B cell (primary cell): ENCODE measurements at regions of chr1 and their contacts with region 1.

Region 1: GRCh38 chr1:245156081-245156735 is 1.4 kb downstream of the KIF26B start:
- DNase-seq: peak; percentile 84
- ATAC-seq: peak; percentile 89
- H3K4me3 ChIP-seq: peak overlapping the region in 4 of 5 experiments; percentile 34 to 66 (median 57)
- H3K4me3 Mint-ChIP-seq: peak overlapping the region; percentile 89
- H3K27ac ChIP-seq: no peak overlapping the region
- H3K27ac Mint-ChIP-seq: no peak overlapping the region
- H3K4me1 ChIP-seq: peaks cover 33 to 35% of the 10 kb centered on the region in 2 donors
- H3K4me1 Mint-ChIP-seq: peaks cover 28% of the 10 kb centered on the region
- H3K27me3 ChIP-seq: peaks cover 0 to 71% (median 47%) of the 10 kb centered on the region in 4 experiments
- H3K27me3 Mint-ChIP-seq: peaks cover 64% of the 10 kb centered on the region
- CTCF ChIP-seq: peak; percentile 76

Region 2: DNA sequence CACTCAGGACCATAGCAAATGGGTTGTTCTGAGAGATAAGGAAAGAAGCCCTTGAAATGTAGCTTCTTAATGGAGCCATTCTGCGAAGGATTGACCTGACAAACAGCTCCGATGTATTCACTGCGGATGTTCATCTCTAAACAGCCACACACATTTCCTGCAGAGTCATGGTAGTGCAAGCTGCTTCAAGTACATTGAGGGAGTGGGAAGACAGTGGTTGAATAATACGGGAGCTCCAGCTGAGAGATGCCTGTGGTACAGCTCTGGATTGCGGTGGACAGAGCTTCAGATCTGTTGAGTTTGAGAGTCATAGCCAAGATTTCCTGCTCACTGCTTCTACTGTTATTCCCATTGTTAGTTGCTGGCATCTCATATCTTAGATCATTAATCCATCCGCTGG is 1018.5 kb before region 1 on chr1:
- CTCF ChIA-PET with region 1: no interaction called
- POLR2A ChIA-PET with region 1: no interaction called
- intact Hi-C with region 1: no loop called
- DNase-seq: peak; percentile 12
- ATAC-seq: no peak
- H3K4me3 ChIP-seq: peak overlapping the region in 3 of 5 experiments; percentile 18 to 42 (median 41)
- H3K4me3 Mint-ChIP-seq: peak overlapping the region; percentile 52
- H3K27ac ChIP-seq: no peak overlapping the region
- H3K27ac Mint-ChIP-seq: no peak overlapping the region
- H3K4me1 ChIP-seq: peaks cover 5 to 9% of the 10 kb centered on the region in 2 donors
- H3K4me1 Mint-ChIP-seq: peaks cover 8% of the 10 kb centered on the region
- H3K27me3 ChIP-seq: peaks cover 0 to 18% (median 5%) of the 10 kb centered on the region in 4 experiments
- H3K27me3 Mint-ChIP-seq: peaks cover 57% of the 10 kb centered on the region
- CTCF ChIP-seq: no peak

Region 3: DNA sequence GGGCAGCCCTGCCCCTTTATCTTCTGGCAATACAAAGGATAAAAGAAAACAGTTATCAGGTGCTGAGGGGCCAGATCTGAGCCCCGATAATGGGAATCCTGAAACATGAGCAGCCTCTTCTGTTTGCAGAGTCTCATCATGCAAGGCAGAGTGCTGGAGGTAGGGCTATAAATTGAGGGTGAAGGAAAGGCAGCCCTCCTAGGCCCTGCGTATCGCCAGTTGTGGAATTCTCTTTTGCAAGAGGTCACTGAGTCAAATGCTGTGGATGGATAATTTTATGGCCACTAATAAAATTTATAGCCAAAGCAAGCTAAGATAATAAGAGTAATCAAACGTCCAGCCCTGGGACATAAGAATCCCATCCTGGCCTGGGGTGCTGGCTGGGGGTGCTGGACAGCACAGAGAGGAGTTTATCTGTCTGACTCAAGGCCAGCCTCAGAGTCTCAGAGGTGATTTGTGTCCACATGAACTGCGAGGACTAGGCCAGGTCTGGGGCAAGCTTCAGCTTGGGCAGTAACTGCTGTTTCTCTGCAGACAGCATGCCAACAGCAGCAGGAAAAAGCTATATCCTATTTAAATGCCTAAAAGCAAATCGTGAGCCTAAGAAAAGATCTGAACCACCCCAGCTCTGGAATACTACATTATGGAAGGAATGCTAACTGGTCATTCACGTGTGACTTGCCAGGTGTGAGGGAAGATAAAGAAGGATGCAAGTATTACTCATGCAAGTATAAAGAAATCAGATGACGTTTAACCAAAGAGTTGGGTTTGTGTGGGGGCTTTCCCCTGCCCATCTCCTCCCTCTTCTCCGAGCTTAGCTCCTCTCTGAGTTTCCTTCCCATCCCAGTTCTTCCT is 253.4 kb after region 1 on chr1:
- CTCF ChIA-PET with region 1: no interaction called
- POLR2A ChIA-PET with region 1: no interaction called
- intact Hi-C with region 1: no loop called
- DNase-seq: no peak
- ATAC-seq: no peak
- H3K4me3 ChIP-seq: no peak overlapping the region
- H3K4me3 Mint-ChIP-seq: no peak overlapping the region
- H3K27ac ChIP-seq: no peak overlapping the region
- H3K27ac Mint-ChIP-seq: no peak overlapping the region
- H3K4me1 ChIP-seq: no peaks in the 10 kb centered on the region
- H3K4me1 Mint-ChIP-seq: no peaks in the 10 kb centered on the region
- H3K27me3 ChIP-seq: no peaks in the 10 kb centered on the region
- H3K27me3 Mint-ChIP-seq: peaks cover 13% of the 10 kb centered on the region
- CTCF ChIP-seq: no peak

Region 4: GRCh38 chr1:246002725-246003441 is 846.7 kb after region 1 on chr1:
- CTCF ChIA-PET with region 1: interaction called, 148 read pairs
- POLR2A ChIA-PET with region 1: no interaction called
- intact Hi-C with region 1: loop called (anchors 1 kb)
- DNase-seq: peak; percentile 82
- ATAC-seq: peak; percentile 65
- H3K4me3 ChIP-seq: no peak overlapping the region
- H3K4me3 Mint-ChIP-seq: no peak overlapping the region
- H3K27ac ChIP-seq: no peak overlapping the region
- H3K27ac Mint-ChIP-seq: no peak overlapping the region
- H3K4me1 ChIP-seq: no peaks in the 10 kb centered on the region
- H3K4me1 Mint-ChIP-seq: peaks cover 9% of the 10 kb centered on the region
- H3K27me3 ChIP-seq: no peaks in the 10 kb centered on the region
- H3K27me3 Mint-ChIP-seq: no peaks in the 10 kb centered on the region
- CTCF ChIP-seq: peak; percentile 90

Region 5: DNA sequence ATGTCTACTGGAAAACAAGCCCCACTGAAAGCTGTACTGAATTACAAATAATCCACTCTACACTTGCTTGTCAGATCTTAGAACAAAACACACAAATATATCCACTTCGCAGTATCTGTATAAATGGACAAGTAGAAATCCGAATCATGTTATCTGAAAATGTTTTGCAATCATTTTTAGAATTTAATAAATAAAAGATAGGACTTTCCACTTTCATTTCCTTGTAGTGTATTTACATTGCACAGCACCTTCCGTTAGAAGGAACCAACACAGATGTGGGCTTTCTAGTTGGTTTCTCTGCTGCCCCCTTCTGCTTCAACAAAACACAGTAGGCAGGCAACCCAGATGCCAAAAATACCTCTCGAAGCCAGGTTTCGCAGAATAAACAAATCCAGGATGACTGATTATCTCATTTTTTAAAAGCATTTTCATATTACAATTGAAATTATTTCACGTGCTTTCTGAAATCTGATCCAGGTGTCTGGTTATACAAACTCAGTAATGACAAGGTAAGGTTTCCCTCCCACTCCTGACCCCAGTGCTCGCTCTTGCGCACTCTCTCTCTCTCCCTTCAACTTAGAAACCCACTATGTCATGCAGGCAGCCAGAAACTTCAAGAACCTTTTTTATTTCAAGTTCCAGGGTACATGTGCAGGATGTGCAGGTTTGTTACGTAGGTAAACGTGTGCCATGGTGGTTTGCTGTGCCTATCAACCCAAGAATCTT is 961.0 kb after region 1 on chr1:
- CTCF ChIA-PET with region 1: interaction called, 10 read pairs
- POLR2A ChIA-PET with region 1: no interaction called
- intact Hi-C with region 1: no loop called
- DNase-seq: peak; percentile 53
- ATAC-seq: peak; percentile 76
- H3K4me3 ChIP-seq: peak overlapping the region in 3 of 5 experiments; percentile 13 to 49 (median 20)
- H3K4me3 Mint-ChIP-seq: peak overlapping the region; percentile 57
- H3K27ac ChIP-seq: peak overlapping the region in 1 of 2 donors; percentile 55
- H3K27ac Mint-ChIP-seq: peak overlapping the region; percentile 33
- H3K4me1 ChIP-seq: peaks cover 11 to 16% of the 10 kb centered on the region in 2 donors
- H3K4me1 Mint-ChIP-seq: peaks cover 30% of the 10 kb centered on the region
- H3K27me3 ChIP-seq: no peaks in the 10 kb centered on the region
- H3K27me3 Mint-ChIP-seq: no peaks in the 10 kb centered on the region
- CTCF ChIP-seq: peak; percentile 56

Region 6: DNA sequence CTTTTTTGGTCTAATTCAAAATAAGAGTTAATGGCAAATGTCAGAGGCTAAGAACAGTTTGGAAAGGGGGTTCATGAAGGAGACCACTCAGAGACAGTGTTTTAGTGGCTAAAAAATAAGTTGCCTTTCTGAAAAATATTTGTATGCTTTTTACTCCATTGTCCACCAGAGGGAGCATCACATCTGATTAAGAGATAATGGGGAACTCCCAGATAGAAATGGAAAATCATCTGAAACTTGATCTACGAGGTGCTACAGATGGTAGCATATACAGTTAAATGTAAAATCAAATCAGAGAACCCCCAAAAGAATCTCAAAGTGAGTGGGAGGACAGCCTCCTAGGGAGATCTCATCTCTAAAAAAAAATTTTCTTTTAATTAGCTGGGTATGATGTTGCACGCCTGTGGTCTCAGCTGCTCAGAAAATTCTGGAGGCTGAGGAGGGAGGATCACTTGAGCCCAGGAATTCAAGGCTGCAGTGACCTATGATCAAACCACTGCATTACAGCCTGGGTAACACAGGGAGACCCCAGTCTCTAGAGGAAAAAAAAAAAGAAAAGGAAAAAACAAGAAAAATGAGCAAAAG is 1341.2 kb after region 1 on chr1:
- CTCF ChIA-PET with region 1: interaction called, 10 read pairs
- POLR2A ChIA-PET with region 1: no interaction called
- intact Hi-C with region 1: loop called (anchors 1 kb)
- DNase-seq: peak; percentile 80
- ATAC-seq: peak; percentile 80
- H3K4me3 ChIP-seq: no peak overlapping the region
- H3K4me3 Mint-ChIP-seq: no peak overlapping the region
- H3K27ac ChIP-seq: no peak overlapping the region
- H3K27ac Mint-ChIP-seq: no peak overlapping the region
- H3K4me1 ChIP-seq: peaks cover 0 to 4% of the 10 kb centered on the region in 2 donors
- H3K4me1 Mint-ChIP-seq: peaks cover 4% of the 10 kb centered on the region
- H3K27me3 ChIP-seq: no peaks in the 10 kb centered on the region
- H3K27me3 Mint-ChIP-seq: no peaks in the 10 kb centered on the region
- CTCF ChIP-seq: peak; percentile 89

Region 7: DNA sequence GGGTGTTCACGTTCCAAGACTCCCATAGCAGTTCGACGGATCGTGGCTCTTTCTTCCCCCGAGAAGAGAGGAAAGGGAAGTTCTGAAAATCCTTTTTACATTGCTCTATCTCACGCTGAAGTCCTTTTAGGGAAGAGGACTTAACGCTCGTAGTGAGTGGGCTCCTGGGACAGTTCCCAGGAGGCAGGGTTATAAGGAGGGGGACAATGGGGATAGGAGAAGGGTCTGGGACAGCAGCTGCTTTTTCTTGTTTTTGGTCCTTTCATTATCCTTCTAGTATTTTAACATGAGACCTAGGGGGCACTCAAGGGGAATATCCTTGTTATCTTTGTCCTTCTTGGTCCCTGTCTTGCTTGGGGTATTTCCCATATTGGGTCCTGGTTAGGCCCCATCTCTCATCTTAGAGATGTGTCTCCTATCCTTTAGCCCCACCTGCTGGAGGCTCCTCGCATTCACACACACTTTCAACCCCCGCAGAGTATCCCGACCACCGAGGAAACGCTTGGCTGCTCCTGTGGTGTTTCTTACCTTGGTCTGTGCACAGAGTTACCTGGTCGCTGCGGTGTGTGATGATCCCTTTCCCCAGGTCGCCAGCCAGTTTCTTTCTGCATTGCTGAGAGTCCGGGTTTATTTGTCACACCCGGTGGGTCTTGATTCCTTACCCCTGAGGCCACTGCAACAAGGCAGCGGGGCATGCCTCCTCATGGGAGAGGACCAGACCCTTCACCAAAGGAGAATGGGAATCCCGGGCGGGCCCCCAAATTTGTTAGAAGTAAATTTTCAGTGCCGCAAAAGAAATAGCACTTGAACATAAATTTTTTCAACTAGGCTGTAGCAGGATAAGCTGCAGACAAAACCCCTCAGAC is 1597.7 kb after region 1 on chr1:
- CTCF ChIA-PET with region 1: interaction called, 4 read pairs
- POLR2A ChIA-PET with region 1: no interaction called
- intact Hi-C with region 1: loop called (anchors 2 kb)
- DNase-seq: peak; percentile 72
- ATAC-seq: peak; percentile 80
- H3K4me3 ChIP-seq: no peak overlapping the region
- H3K4me3 Mint-ChIP-seq: no peak overlapping the region
- H3K27ac ChIP-seq: no peak overlapping the region
- H3K27ac Mint-ChIP-seq: no peak overlapping the region
- H3K4me1 ChIP-seq: peaks cover 1 to 3% of the 10 kb centered on the region in 2 donors
- H3K4me1 Mint-ChIP-seq: peaks cover 2% of the 10 kb centered on the region
- H3K27me3 ChIP-seq: no peaks in the 10 kb centered on the region
- H3K27me3 Mint-ChIP-seq: no peaks in the 10 kb centered on the region
- CTCF ChIP-seq: peak; percentile 78